ENCODE measurements at regions of chr1 and their contacts with region 1.

Region 1: DNA sequence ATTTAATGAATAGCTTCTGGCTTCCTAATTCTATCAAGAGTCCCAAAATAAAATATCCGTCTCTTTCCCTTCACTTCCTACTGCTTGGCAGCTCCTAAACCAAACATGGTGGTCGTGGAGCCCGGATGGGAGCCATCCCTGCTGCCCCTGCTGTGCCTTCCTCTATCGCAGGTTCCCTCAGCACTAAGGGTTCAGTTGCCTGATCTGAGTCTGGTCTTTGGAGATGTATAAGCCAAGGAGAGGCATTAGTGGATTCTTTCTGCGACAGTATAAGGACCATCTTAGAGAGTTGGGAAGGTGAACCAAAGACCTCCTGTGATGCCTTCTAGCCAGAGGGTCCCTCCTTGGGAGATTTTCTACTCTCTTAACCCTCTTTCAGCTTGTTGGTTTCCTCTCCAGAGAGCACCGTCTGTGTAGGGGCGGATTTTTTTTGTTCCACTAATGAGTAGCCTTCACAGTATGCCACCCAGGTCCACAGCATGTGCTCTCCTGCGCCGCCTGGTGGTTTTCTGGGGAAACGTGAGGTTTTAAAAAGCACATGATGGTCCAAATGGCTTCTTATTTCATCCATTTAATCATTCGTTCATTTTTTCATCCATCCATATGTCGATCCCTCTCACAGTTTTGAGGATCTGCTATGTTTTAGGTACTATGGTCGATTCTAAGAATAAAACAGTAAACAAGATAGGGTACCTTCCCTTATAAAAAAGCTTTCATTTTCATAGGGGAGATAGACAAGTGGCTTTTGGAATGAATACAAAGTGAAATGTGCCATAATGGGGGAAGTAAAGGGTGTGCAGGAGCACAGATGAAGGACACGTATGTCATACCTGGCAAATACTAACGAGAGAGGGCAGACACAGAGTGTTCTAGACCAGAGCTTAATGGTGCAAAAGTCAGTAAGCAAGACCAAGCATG is 71.0 kb downstream of the NFASC start:
- DNase-seq: peak; percentile 77
- H3K4me3 ChIP-seq: no peak overlapping the region; a peak in 1 of 4 replicates
- H3K27ac ChIP-seq: no peak overlapping the region
- H3K4me1 ChIP-seq: no peaks in the 10 kb centered on the region
- H3K27me3 ChIP-seq: no peaks in the 10 kb centered on the region
- CTCF ChIP-seq: peak; percentile 84
- EP300 ChIP-seq: no peak
- RAD21 ChIP-seq: peak; percentile 77

Region 2: GRCh38 chr1:204763706-204764427 is 177.8 kb before region 1 on chr1:
- CTCF ChIA-PET with region 1: interaction called, 15 read pairs
- POLR2A ChIA-PET with region 1: no interaction called
- DNase-seq: peak; percentile 81
- H3K4me3 ChIP-seq: peak overlapping the region in 1 of 2 experiments; percentile 7; a peak in 1 of 4 replicates
- H3K27ac ChIP-seq: no peak overlapping the region
- H3K4me1 ChIP-seq: peaks cover 0 to 9% of the 10 kb centered on the region in 2 experiments; a peak in 1 of 4 replicates
- H3K27me3 ChIP-seq: peaks cover 2% of the 10 kb centered on the region; the same call in 1 of the 2 replicates
- CTCF ChIP-seq: peak; percentile 73
- EP300 ChIP-seq: no peak
- RAD21 ChIP-seq: peak; percentile 82

Region 3: GRCh38 chr1:204814181-204814884 is 127.3 kb before region 1 on chr1:
- CTCF ChIA-PET with region 1: interaction called, 337 read pairs
- POLR2A ChIA-PET with region 1: no interaction called
- DNase-seq: no peak
- H3K4me3 ChIP-seq: no peak overlapping the region
- H3K27ac ChIP-seq: no peak overlapping the region
- H3K4me1 ChIP-seq: peaks cover 0 to 4% of the 10 kb centered on the region in 2 experiments; a peak in 1 of 4 replicates
- H3K27me3 ChIP-seq: peaks cover 26% of the 10 kb centered on the region
- CTCF ChIP-seq: no peak
- EP300 ChIP-seq: no peak
- RAD21 ChIP-seq: no peak

Region 4: DNA sequence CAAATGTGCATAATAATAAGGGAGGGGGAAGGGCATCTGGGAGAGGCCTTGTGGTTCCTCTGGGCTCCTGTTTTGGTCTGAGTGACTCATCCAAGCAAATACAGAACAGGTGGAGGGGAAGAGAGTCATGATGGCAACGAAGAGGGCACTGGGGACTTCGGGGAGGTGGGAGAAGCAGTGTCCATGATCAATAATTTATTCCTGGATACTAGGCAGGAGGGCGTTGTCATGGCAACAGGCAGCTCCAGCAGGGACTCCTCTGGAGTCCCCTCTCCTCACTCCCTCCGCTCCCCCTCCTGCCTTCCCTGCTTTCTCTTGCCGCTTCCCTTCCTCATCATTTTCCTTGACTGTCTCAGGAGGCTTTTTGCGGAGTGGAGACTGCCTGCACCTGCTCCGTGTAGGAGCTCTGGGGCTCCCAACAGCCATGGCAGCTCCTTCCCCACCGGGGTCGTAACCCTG is 83.3 kb before region 1 on chr1:
- CTCF ChIA-PET with region 1: interaction called, 17 read pairs
- POLR2A ChIA-PET with region 1: no interaction called
- DNase-seq: no peak
- H3K4me3 ChIP-seq: no peak overlapping the region
- H3K27ac ChIP-seq: no peak overlapping the region
- H3K4me1 ChIP-seq: peaks cover 0 to 3% of the 10 kb centered on the region in 2 experiments; a peak in 1 of 4 replicates
- H3K27me3 ChIP-seq: no peaks in the 10 kb centered on the region; the same call in 1 of the 2 replicates
- CTCF ChIP-seq: no peak
- EP300 ChIP-seq: no peak
- RAD21 ChIP-seq: no peak

Region 5: GRCh38 chr1:204894031-204894430 is 47.6 kb before region 1 on chr1:
- CTCF ChIA-PET with region 1: interaction called, 52 read pairs
- POLR2A ChIA-PET with region 1: no interaction called
- DNase-seq: no peak
- H3K4me3 ChIP-seq: no peak overlapping the region
- H3K27ac ChIP-seq: no peak overlapping the region
- H3K4me1 ChIP-seq: peaks cover 0 to 11% of the 10 kb centered on the region in 2 experiments; a peak in 2 of 4 replicates
- H3K27me3 ChIP-seq: no peaks in the 10 kb centered on the region; the same call in 1 of the 2 replicates
- CTCF ChIP-seq: no peak
- EP300 ChIP-seq: no peak
- RAD21 ChIP-seq: no peak

Region 6: GRCh38 chr1:204924013-204924967 is 17.4 kb before region 1 on chr1:
- CTCF ChIA-PET with region 1: interaction called, 130 read pairs
- POLR2A ChIA-PET with region 1: no interaction called
- DNase-seq: no peak
- H3K4me3 ChIP-seq: no peak overlapping the region
- H3K27ac ChIP-seq: no peak overlapping the region
- H3K4me1 ChIP-seq: no peaks in the 10 kb centered on the region
- H3K27me3 ChIP-seq: no peaks in the 10 kb centered on the region
- CTCF ChIP-seq: no peak
- EP300 ChIP-seq: no peak
- RAD21 ChIP-seq: no peak

Region 7: GRCh38 chr1:204975570-204976235 is 34.0 kb after region 1 on chr1:
- CTCF ChIA-PET with region 1: interaction called, 18 read pairs
- POLR2A ChIA-PET with region 1: no interaction called
- DNase-seq: peak; percentile 88
- H3K4me3 ChIP-seq: no peak overlapping the region; a peak in 1 of 4 replicates
- H3K27ac ChIP-seq: no peak overlapping the region
- H3K4me1 ChIP-seq: peaks cover 0 to 11% of the 10 kb centered on the region in 2 experiments; a peak in 2 of 4 replicates
- H3K27me3 ChIP-seq: no peaks in the 10 kb centered on the region
- CTCF ChIP-seq: peak; percentile 77
- EP300 ChIP-seq: no peak
- RAD21 ChIP-seq: peak; percentile 79

Region 8: GRCh38 chr1:205284343-205285144 is 342.9 kb after region 1 on chr1:
- CTCF ChIA-PET with region 1: no interaction called
- POLR2A ChIA-PET with region 1: no interaction called
- DNase-seq: peak; percentile 56
- H3K4me3 ChIP-seq: no peak overlapping the region
- H3K27ac ChIP-seq: peak overlapping the region; percentile 66 to 82
- H3K4me1 ChIP-seq: peaks cover 8 to 33% of the 10 kb centered on the region in 2 experiments; a peak in 3 of 4 replicates
- H3K27me3 ChIP-seq: no peaks in the 10 kb centered on the region
- CTCF ChIP-seq: no peak
- EP300 ChIP-seq: peak in 1 of 2 experiments; percentile 77; a peak in 1 of 4 replicates
- RAD21 ChIP-seq: no peak